Mammary epithelial cell (primary cell): ENCODE measurements at regions of chr10 and their contacts with region 1.

Region 1: DNA sequence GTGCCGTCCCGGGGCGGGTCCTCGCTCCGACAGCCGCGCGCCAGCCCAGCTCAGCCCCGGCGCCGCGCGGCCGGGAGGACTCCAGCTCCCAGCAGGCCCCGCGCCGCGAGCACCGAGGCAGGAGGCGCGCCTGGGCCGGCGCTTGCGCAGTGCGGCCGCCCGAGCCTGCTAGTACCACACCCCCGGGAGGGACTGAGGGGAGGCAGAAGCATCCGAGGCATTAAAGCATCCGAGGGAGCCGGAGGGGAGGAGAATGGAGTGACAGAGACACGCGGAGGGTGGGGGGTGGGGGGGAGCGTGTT is at the start of gene GRK5:
- DNase-seq: peak; percentile 95
- H3K4me3 ChIP-seq: peak within 1 kb of the TSS; percentile 47 to 79 (median 61)
- H3K27ac ChIP-seq: peak within 1 kb of the TSS; percentile 41
- H3K4me1 ChIP-seq: peaks cover 30% of the 10 kb centered on the region
- H3K27me3 ChIP-seq: no peaks in the 10 kb centered on the region
- CTCF ChIP-seq: no peak
- total RNA-seq, gene GRK5: 1.2 to 6.9 TPM

Region 2: DNA sequence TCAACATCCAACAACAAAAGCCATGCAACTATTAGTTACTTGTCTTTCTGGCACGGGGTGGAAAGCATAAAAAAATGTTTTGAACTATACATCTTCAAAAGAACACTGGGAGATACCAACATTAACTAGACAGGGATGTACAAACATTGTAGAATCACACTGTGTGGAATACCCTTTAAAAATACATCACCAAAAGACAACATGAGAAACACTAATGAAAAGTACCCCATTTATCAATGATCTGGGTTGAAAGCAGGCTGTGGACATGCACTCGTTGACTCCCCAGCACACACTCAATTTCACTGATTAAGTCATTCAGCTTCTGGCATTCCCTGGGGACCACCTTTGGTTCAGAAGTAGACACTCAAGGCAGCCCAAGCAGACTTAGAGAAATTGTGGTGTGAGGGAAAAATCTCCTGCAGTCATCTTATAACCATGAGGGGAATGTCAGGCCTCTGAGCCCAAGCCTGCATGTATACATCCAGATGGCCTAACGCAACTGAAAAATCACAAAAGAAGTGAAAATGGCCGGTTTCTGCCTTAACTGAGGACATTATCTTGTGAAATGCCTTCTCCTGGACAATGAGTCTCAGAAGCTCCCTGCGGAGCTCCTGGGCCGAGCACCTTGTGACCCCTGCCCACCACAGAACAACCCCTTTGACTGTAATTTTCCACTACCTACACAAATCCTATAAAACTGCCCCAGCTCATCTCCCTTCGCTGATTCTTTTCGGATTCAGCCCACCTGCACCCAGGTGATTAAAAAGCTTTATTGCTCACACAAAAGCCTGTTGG is 505.6 kb before region 1 on chr10:
- CTCF ChIA-PET with region 1: no interaction called
- dilution Hi-C with region 1: no loop called
- in situ Hi-C with region 1: no loop called
- intact Hi-C with region 1: no loop called
- DNase-seq: no peak
- H3K4me3 ChIP-seq: no peak overlapping the region
- H3K27ac ChIP-seq: no peak overlapping the region
- H3K4me1 ChIP-seq: peaks cover 12% of the 10 kb centered on the region
- H3K27me3 ChIP-seq: no peaks in the 10 kb centered on the region
- CTCF ChIP-seq: no peak

Region 3: GRCh38 chr10:119165171-119166110 is 41.9 kb before region 1 on chr10 and contains the start of gene SFXN4:
- CTCF ChIA-PET with region 1: no interaction called
- dilution Hi-C with region 1: no loop called
- in situ Hi-C with region 1: no loop called
- intact Hi-C with region 1: loop called (anchors 5 kb)
- DNase-seq: peak; percentile 48
- H3K4me3 ChIP-seq: peak within 1 kb of the TSS; percentile 75 to 94 (median 79)
- H3K27ac ChIP-seq: peak within 1 kb of the TSS; percentile 46
- H3K4me1 ChIP-seq: peaks cover 16% of the 10 kb centered on the region
- H3K27me3 ChIP-seq: no peaks in the 10 kb centered on the region
- CTCF ChIP-seq: no peak
- total RNA-seq, gene SFXN4: 11.3 to 22.6 TPM

Region 4: GRCh38 chr10:119315128-119316001 is 108.0 kb after region 1 on chr10:
- CTCF ChIA-PET with region 1: interaction called, 13 read pairs
- dilution Hi-C with region 1: no loop called
- in situ Hi-C with region 1: no loop called
- intact Hi-C with region 1: no loop called
- DNase-seq: peak; percentile 73
- H3K4me3 ChIP-seq: no peak overlapping the region
- H3K27ac ChIP-seq: peak overlapping the region; percentile 35
- H3K4me1 ChIP-seq: peaks cover 33% of the 10 kb centered on the region
- H3K27me3 ChIP-seq: no peaks in the 10 kb centered on the region
- CTCF ChIP-seq: no peak

Region 5: DNA sequence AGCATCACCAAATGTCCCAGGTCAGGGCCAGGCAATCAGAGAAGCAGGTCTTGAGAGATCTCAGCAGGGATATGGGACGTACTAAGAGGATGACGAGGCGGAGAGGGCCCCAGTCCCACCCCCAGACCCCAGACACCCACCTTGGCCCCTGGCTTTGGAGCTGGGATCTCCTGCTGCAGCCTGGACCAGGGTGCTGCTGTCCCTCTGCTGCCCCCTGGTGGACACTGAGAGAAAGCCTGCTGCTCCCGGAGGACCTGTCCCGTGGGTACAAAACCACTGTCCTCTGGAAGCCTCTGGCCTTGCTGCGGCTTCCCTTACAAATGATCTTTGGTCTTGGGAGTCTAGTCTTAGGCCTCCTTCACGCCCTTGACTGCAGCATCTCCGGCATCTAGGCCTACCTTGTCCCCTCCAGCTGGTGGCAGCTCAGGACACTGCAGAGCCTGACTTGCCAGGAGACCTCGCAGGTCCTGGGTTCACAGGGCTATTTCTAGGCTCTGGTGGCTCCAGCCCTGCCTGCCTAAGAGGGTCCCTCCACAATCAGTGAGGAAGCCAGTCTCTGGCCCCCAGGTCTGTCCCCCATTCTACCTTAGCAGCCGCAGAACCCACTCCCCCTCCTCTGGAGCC is 238.1 kb after region 1 on chr10:
- CTCF ChIA-PET with region 1: interaction called, 4 read pairs
- dilution Hi-C with region 1: no loop called
- in situ Hi-C with region 1: no loop called
- intact Hi-C with region 1: loop called (anchors 1 kb)
- DNase-seq: peak; percentile 50
- H3K4me3 ChIP-seq: no peak overlapping the region
- H3K27ac ChIP-seq: no peak overlapping the region
- H3K4me1 ChIP-seq: peaks cover 17% of the 10 kb centered on the region
- H3K27me3 ChIP-seq: no peaks in the 10 kb centered on the region
- CTCF ChIP-seq: peak; percentile 84 to 94

Region 6: GRCh38 chr10:119596537-119597404 is 389.5 kb after region 1 on chr10 and contains the start of gene TIAL1:
- CTCF ChIA-PET with region 1: no interaction called
- dilution Hi-C with region 1: no loop called
- in situ Hi-C with region 1: no loop called
- intact Hi-C with region 1: loop called (anchors 5 kb)
- DNase-seq: peak; percentile 99
- H3K4me3 ChIP-seq: peak within 1 kb of the TSS; percentile 62 to 98 (median 98)
- H3K27ac ChIP-seq: peak within 1 kb of the TSS; percentile 76
- H3K4me1 ChIP-seq: peaks cover 30% of the 10 kb centered on the region
- H3K27me3 ChIP-seq: no peaks in the 10 kb centered on the region
- CTCF ChIP-seq: no peak
- total RNA-seq, gene TIAL1: 47.8 to 141 TPM